ENCODE measurements at regions of chr7 and their contacts with region 1.

Region 1: GRCh38 chr7:75531359-75531821 is 39.3 kb downstream of the SPDYE5 start:
- DNase-seq: no peak
- ATAC-seq: no peak
- H3K4me3 ChIP-seq: no peak overlapping the region
- H3K4me3 Mint-ChIP-seq: peak overlapping the region; percentile 50
- H3K27ac ChIP-seq: no peak overlapping the region
- H3K27ac Mint-ChIP-seq: no peak overlapping the region
- H3K4me1 ChIP-seq: peaks cover 19% of the 10 kb centered on the region
- H3K4me1 Mint-ChIP-seq: peaks cover 18% of the 10 kb centered on the region
- H3K27me3 ChIP-seq: no peaks in the 10 kb centered on the region
- H3K27me3 Mint-ChIP-seq: no peaks in the 10 kb centered on the region
- CTCF ChIP-seq: no peak

Region 2: DNA sequence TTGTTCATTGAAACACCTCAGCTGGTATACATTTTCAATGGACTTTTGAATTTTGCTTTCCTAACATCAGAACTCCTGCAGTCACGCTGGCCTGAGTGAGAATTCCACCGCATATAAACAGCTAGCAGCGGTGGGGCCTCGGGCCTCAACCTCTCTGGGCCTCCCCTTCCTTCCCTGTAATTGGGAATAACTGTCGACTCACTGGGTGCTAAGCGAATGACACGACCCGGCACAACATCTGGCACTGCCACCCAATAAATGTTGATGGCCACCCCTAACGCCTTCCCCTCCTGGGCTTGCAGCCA is 458.5 kb before region 1 on chr7:
- CTCF ChIA-PET with region 1: no interaction called
- POLR2A ChIA-PET with region 1: no interaction called
- intact Hi-C with region 1: loop called in 1 of 2 experiments (anchors 2 kb)
- DNase-seq: no peak
- ATAC-seq: no peak
- H3K4me3 ChIP-seq: peak overlapping the region; percentile 74
- H3K4me3 Mint-ChIP-seq: peak overlapping the region; percentile 94
- H3K27ac ChIP-seq: peak overlapping the region; percentile 67 to 78
- H3K27ac Mint-ChIP-seq: peak overlapping the region; percentile 86
- H3K4me1 ChIP-seq: peaks cover 9% of the 10 kb centered on the region
- H3K4me1 Mint-ChIP-seq: peaks cover 16% of the 10 kb centered on the region
- H3K27me3 ChIP-seq: no peaks in the 10 kb centered on the region
- H3K27me3 Mint-ChIP-seq: no peaks in the 10 kb centered on the region
- CTCF ChIP-seq: no peak

Region 3: DNA sequence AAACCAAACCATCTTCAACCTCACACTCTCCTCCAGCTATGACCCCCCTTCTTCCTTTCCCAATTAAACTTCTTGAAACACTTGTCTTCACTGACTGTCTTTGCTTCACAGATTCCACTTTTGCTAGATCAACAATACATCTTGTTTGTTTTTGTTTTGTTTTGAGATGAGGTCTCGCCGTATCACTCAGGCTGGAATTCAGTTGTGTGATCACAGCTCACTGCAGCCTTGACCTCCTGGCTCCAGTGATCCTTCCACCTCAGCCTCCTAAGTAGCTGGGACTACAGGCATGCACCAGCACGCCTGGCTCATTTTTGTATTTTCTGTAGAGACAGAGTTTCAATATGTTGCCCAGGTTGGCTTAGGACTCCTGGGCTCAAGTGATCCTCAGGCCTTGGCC is 147.7 kb after region 1 on chr7:
- CTCF ChIA-PET with region 1: no interaction called
- POLR2A ChIA-PET with region 1: no interaction called
- intact Hi-C with region 1: no loop called
- DNase-seq: no peak
- ATAC-seq: no peak
- H3K4me3 ChIP-seq: no peak overlapping the region
- H3K4me3 Mint-ChIP-seq: no peak overlapping the region
- H3K27ac ChIP-seq: no peak overlapping the region
- H3K27ac Mint-ChIP-seq: no peak overlapping the region
- H3K4me1 ChIP-seq: no peaks in the 10 kb centered on the region
- H3K4me1 Mint-ChIP-seq: no peaks in the 10 kb centered on the region
- H3K27me3 ChIP-seq: no peaks in the 10 kb centered on the region
- H3K27me3 Mint-ChIP-seq: no peaks in the 10 kb centered on the region
- CTCF ChIP-seq: no peak

Region 4: GRCh38 chr7:75738987-75739795 is 207.8 kb after region 1 on chr7:
- CTCF ChIA-PET with region 1: no interaction called
- POLR2A ChIA-PET with region 1: no interaction called
- intact Hi-C with region 1: loop called in 1 of 2 experiments (anchors 5 kb)
- DNase-seq: peak; percentile 99 to 100 (median 100)
- ATAC-seq: peak; percentile 91
- H3K4me3 ChIP-seq: peak overlapping the region; percentile 82
- H3K4me3 Mint-ChIP-seq: peak overlapping the region; percentile 100
- H3K27ac ChIP-seq: peak overlapping the region; percentile 77
- H3K27ac Mint-ChIP-seq: peak overlapping the region; percentile 89
- H3K4me1 ChIP-seq: peaks cover 21% of the 10 kb centered on the region
- H3K4me1 Mint-ChIP-seq: peaks cover 16% of the 10 kb centered on the region
- H3K27me3 ChIP-seq: no peaks in the 10 kb centered on the region
- H3K27me3 Mint-ChIP-seq: peaks cover 4% of the 10 kb centered on the region
- CTCF ChIP-seq: no peak

Region 5: DNA sequence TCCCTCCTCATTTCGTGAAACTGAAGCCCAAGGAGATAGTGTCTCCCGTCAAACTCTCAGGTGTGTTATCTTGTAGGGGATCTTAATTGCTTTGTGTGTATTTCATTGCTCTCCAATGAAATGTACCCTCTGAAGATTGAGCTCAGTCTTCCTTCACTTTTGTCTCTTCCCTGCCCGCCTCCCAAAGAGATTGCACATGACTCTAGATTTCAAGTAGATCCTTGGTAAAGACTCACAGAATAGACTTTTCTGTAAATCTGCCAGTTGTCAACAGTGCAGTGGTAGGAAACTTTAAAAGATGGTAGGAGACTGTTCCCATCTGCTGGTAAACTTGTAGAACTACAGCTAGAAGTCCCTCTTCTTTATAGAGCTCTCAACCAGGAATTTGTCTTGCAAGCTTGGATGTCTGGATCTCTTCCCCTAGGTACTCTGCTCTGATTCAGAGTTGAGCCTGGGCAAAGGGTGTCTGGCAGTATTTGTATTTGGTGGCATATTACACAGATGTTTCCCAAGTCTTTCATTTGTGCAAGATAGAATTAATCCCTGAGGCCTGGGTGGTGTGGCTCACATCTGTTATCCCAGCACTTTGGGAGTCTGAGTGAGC is 231.0 kb after region 1 on chr7:
- CTCF ChIA-PET with region 1: no interaction called
- POLR2A ChIA-PET with region 1: no interaction called
- intact Hi-C with region 1: loop called in 1 of 2 experiments (anchors 5 kb)
- DNase-seq: peak in 4 of 14 experiments; percentile 1 to 64 (median 61)
- ATAC-seq: peak; percentile 94
- H3K4me3 ChIP-seq: no peak overlapping the region
- H3K4me3 Mint-ChIP-seq: no peak overlapping the region
- H3K27ac ChIP-seq: no peak overlapping the region
- H3K27ac Mint-ChIP-seq: no peak overlapping the region
- H3K4me1 ChIP-seq: no peaks in the 10 kb centered on the region
- H3K4me1 Mint-ChIP-seq: peaks cover 3% of the 10 kb centered on the region
- H3K27me3 ChIP-seq: no peaks in the 10 kb centered on the region
- H3K27me3 Mint-ChIP-seq: no peaks in the 10 kb centered on the region
- CTCF ChIP-seq: peak; percentile 72

Region 6: DNA sequence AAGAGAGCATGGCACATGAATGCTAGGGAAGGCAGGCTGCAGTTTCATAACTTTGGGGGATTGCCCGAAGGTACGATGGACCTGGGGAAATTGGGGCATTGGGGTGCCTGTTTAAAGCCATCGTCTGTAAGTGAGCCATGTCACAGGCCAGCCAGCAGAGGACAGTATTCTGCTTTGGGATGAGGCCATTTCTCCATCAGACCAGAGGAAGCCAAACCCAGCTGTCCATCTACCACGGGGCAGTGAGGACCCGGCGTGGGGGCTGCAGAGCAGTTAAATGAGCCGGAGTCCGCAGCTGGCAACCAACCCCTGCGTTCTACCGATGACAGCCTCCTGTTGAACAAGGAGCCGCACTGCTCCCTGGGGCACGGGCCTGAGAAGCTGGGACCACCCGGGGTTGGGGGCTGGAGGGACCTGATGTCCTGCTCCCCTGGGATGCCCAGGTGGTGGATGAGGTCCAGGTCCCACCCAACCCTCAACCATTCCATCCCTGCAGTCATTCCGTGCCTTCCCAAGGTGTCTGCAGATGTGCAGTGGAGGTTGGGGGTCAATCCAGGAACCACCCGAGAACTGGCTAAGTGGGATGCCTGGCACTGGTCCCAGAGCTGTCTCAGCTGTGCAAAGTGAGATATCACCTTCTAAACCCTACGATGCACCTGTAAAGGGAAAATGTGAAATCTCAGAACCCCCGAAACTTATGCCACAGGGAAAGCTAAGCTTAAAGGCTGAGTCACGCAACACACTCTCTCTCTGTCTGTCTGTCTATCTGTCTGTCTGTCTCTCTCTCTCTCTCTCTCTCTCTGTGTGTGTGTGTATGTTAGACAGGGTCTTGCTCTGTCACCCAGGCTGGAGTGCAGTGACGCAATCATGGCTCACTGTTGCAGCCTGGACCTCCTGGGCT is 335.3 kb after region 1 on chr7:
- CTCF ChIA-PET with region 1: no interaction called
- POLR2A ChIA-PET with region 1: no interaction called
- intact Hi-C with region 1: no loop called
- DNase-seq: peak in 13 of 14 experiments; percentile 23 to 77 (median 36)
- ATAC-seq: peak; percentile 79
- H3K4me3 ChIP-seq: no peak overlapping the region
- H3K4me3 Mint-ChIP-seq: no peak overlapping the region
- H3K27ac ChIP-seq: no peak overlapping the region
- H3K27ac Mint-ChIP-seq: no peak overlapping the region
- H3K4me1 ChIP-seq: peaks cover 5% of the 10 kb centered on the region
- H3K4me1 Mint-ChIP-seq: no peaks in the 10 kb centered on the region
- H3K27me3 ChIP-seq: no peaks in the 10 kb centered on the region
- H3K27me3 Mint-ChIP-seq: peaks cover 7% of the 10 kb centered on the region
- CTCF ChIP-seq: peak; percentile 71

Region 7: GRCh38 chr7:76020031-76020714 is 488.8 kb after region 1 on chr7:
- CTCF ChIA-PET with region 1: no interaction called
- POLR2A ChIA-PET with region 1: no interaction called
- intact Hi-C with region 1: loop called in 1 of 2 experiments (anchors 10 kb)
- DNase-seq: peak; percentile 42 to 86 (median 66)
- ATAC-seq: peak; percentile 64
- H3K4me3 ChIP-seq: no peak overlapping the region
- H3K4me3 Mint-ChIP-seq: no peak overlapping the region
- H3K27ac ChIP-seq: no peak overlapping the region
- H3K27ac Mint-ChIP-seq: no peak overlapping the region
- H3K4me1 ChIP-seq: peaks cover 11% of the 10 kb centered on the region
- H3K4me1 Mint-ChIP-seq: peaks cover 6% of the 10 kb centered on the region
- H3K27me3 ChIP-seq: no peaks in the 10 kb centered on the region
- H3K27me3 Mint-ChIP-seq: no peaks in the 10 kb centered on the region
- CTCF ChIP-seq: peak; percentile 88

Measured in CD4-positive, alpha-beta T cell (primary cell).